ENCODE measurements at regions of chr15 and their contacts with region 1.

Region 1: DNA sequence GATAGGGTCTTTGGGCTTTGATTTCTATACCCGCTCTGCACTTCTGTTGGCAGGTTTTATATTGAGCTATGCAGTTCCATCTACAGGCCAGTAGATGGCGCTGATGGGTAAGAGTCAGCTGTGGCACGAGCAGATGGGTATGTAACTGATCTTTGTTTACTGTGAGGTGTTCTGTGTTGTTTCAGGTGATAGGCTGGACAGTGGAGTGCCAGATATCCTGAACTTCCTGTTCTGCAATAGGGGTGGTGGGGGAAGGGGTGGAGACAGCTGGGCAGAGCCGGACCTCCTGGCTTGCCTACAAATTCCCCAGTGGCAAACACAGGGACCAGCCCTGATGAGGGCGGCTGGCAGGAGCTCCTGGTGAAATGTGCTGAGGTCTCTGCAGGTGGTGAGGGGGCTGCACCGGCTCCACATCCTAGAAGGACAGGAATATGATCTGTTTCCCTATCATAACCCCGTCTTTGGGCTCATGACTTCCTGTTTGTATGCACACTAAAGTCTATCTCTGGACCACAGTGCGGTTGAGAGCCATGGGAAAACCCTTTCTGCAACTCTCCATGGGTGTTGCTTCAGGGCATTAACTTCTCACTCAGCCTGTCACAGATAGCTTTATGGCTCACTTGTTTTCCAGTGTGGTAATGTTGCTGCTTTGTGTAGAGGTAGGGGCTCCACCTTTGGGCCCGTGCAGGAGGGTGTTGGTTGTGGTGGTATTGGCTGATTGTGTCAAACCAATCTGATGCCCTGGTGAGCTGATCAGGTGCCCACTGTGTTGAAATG is 13.4 kb upstream of the FAM98B start:
- DNase-seq: peak; percentile 41

Region 2: GRCh38 chr15:38297623-38298388 is 142.7 kb before region 1 on chr15:
- CTCF ChIA-PET with region 1: no interaction called
- POLR2A ChIA-PET with region 1: no interaction called
- DNase-seq: no peak

Region 3: DNA sequence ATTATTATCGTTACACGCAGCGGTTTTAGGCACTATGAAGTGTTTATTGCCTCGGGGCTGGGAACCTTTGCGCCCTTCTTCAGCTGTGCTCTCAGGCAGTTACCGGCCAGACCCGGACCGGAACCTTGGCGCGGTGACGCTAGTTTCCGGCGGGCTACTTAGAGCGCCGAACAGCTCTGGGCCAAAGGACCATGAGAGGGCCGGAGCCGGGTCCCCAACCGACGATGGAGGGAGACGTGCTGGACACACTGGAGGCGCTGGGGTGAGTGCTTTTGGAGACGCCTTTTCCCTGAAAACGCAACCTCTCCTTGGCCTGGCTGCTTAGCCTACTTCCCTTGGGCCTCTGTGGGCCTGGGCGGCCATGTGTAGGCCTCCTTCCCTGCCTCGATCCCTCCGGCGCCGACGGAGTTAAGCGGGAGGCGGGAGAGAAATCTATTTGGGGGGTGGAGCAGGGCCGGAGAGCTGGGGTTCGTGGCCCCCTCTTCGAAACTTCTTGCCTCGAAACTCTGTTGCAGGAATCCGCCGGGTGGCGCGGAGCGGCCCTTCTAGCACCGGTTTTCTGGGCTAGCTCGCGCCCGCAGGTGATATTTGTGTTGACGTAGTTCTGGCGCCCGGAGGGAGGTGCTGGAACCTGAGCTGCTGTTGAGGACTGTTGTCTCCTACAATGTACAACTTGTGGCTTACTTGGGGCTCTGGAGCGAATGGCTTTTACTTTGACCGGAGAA is 13.6 kb after region 1 on chr15 and contains the start of gene FAM98B:
- CTCF ChIA-PET with region 1: interaction called, 8 read pairs
- POLR2A ChIA-PET with region 1: interaction called, 15 read pairs
- DNase-seq: peak; percentile 65

Region 4: GRCh38 chr15:38683382-38684242 is 243.1 kb after region 1 on chr15:
- CTCF ChIA-PET with region 1: interaction called, 20 read pairs
- POLR2A ChIA-PET with region 1: no interaction called
- DNase-seq: peak; percentile 27

Measured in HEK293T (cell line).